Activated CD4-positive, alpha-beta memory T cell treated with anti-CD3 and anti-CD28 coated beads, Interleukin-2, amount 10 ng/mL, durations not matched to agents 7 days and 5 days (primary cell): ENCODE measurements at regions of chr11 and their contacts with region 1.

Region 1: DNA sequence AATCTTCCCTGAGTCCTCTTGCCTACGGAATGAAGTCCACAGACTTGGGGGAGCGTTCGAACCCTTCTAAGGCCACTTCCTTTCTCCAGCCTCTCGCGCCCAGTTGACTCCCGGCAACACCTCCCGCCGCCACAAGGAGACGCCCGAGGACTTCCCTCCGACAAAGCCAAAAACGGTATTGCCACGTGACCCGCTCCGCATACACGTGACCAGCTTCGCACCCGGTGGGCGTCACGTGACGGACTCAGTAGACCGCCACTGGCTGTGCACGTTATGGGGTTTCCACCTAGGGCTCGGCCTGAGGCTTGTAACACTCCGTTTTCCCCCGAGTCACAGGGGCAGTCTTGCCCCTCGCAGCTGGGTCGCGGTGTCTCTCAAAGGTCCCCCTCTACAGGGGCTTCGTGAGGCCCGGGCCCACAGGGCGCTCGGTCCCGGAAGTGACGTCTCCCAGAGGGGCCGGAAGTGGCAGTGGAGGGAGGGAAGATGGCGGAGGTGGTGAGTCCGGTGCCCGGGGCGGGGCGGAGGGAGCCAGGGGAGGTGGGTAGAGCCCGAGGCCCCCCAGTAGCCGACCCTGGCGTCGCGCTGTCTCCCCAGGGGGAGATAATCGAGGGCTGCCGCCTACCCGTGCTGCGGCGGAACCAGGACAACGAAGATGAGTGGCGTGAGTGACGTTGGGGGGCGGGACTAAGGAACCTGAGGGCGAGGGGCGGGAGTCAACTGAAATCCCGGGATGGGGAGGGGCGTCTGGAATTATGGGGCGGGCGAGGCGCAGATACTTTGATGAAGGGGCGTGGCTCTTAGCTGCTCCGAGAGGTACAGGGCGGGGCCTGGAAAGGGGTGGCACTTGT is at the start of gene KAT5:
- DNase-seq: peak; percentile 99
- H3K4me3 Mint-ChIP-seq: peak within 1 kb of the TSS; percentile 82
- H3K27ac Mint-ChIP-seq: peak within 1 kb of the TSS; percentile 95
- H3K4me1 Mint-ChIP-seq: peaks cover 42% of the 10 kb centered on the region
- H3K27me3 Mint-ChIP-seq: no peaks in the 10 kb centered on the region
- total RNA-seq, gene KAT5: 62.6 to 63.0 TPM

Region 2: GRCh38 chr11:65524014-65524740 is 187.8 kb before region 1 on chr11:
- CTCF ChIA-PET with region 1: no interaction called
- POLR2A ChIA-PET with region 1: no interaction called
- DNase-seq: no peak
- H3K4me3 Mint-ChIP-seq: peak overlapping the region; percentile 66
- H3K27ac Mint-ChIP-seq: peak overlapping the region; percentile 83
- H3K4me1 Mint-ChIP-seq: peaks cover 53% of the 10 kb centered on the region
- H3K27me3 Mint-ChIP-seq: no peaks in the 10 kb centered on the region

Region 3: GRCh38 chr11:65637794-65638317 is 74.2 kb before region 1 on chr11 and contains the start of gene SIPA1:
- CTCF ChIA-PET with region 1: interaction called, 13 read pairs
- POLR2A ChIA-PET with region 1: interaction called, 8 read pairs
- DNase-seq: peak; percentile 69
- H3K4me3 Mint-ChIP-seq: peak within 1 kb of the TSS; percentile 95
- H3K27ac Mint-ChIP-seq: peak within 1 kb of the TSS; percentile 97
- H3K4me1 Mint-ChIP-seq: peaks cover 64% of the 10 kb centered on the region
- H3K27me3 Mint-ChIP-seq: no peaks in the 10 kb centered on the region
- total RNA-seq, gene SIPA1: 201 to 205 TPM

Region 4: GRCh38 chr11:65662799-65663638 is 49.0 kb before region 1 on chr11 and contains the start of gene RELA:
- CTCF ChIA-PET with region 1: interaction called, 6 read pairs
- POLR2A ChIA-PET with region 1: interaction called, 13 read pairs
- DNase-seq: peak; percentile 91
- H3K4me3 Mint-ChIP-seq: peak within 1 kb of the TSS; percentile 89
- H3K27ac Mint-ChIP-seq: peak within 1 kb of the TSS; percentile 93
- H3K4me1 Mint-ChIP-seq: peaks cover 37% of the 10 kb centered on the region
- H3K27me3 Mint-ChIP-seq: no peaks in the 10 kb centered on the region
- total RNA-seq, gene RELA: 91.2 to 102 TPM

Region 5: DNA sequence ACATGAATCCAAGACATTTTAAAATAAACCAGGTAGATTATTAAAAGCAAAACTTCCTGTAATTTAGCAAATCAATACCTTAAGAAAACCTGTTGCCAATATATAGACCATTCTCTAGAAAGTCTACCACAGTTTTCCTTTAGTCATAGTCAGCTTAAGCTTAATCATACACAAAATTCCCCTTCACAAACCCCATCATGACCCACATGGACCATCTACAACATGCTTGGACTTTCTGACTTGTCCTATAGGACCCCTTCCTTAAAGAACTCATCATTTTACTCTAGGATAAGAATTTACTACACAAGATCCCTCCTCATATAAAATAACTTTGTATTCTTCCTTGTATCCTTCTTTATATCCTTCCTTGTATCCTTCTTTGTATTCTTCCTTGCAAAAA is 24.8 kb after region 1 on chr11:
- CTCF ChIA-PET with region 1: no interaction called
- POLR2A ChIA-PET with region 1: no interaction called
- DNase-seq: no peak
- H3K4me3 Mint-ChIP-seq: no peak overlapping the region
- H3K27ac Mint-ChIP-seq: no peak overlapping the region
- H3K4me1 Mint-ChIP-seq: no peaks in the 10 kb centered on the region
- H3K27me3 Mint-ChIP-seq: peaks cover 38% of the 10 kb centered on the region

Region 6: DNA sequence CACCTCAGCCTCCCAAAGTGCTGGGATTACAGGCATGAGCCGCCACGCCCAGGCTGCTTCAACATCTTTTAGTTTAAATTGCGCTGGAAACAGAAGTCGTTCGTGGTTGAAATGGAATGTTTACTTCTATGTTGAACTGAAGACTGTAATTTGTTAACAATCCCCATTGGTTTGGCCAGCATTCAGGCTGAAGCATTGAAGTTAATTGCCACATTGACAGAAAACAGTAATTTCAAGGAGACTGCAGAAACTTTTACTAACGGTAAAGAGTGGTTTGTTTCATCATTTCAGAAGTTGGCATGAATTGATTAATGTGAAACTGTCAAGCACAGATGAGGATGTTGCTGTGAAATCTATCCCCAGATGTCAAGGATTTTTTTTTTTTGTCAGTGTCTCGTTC is 54.5 kb after region 1 on chr11:
- CTCF ChIA-PET with region 1: interaction called, 35 read pairs
- POLR2A ChIA-PET with region 1: interaction called, 3 read pairs
- DNase-seq: no peak
- H3K4me3 Mint-ChIP-seq: no peak overlapping the region
- H3K27ac Mint-ChIP-seq: no peak overlapping the region
- H3K4me1 Mint-ChIP-seq: peaks cover 7% of the 10 kb centered on the region
- H3K27me3 Mint-ChIP-seq: peaks cover 1% of the 10 kb centered on the region

Region 7: DNA sequence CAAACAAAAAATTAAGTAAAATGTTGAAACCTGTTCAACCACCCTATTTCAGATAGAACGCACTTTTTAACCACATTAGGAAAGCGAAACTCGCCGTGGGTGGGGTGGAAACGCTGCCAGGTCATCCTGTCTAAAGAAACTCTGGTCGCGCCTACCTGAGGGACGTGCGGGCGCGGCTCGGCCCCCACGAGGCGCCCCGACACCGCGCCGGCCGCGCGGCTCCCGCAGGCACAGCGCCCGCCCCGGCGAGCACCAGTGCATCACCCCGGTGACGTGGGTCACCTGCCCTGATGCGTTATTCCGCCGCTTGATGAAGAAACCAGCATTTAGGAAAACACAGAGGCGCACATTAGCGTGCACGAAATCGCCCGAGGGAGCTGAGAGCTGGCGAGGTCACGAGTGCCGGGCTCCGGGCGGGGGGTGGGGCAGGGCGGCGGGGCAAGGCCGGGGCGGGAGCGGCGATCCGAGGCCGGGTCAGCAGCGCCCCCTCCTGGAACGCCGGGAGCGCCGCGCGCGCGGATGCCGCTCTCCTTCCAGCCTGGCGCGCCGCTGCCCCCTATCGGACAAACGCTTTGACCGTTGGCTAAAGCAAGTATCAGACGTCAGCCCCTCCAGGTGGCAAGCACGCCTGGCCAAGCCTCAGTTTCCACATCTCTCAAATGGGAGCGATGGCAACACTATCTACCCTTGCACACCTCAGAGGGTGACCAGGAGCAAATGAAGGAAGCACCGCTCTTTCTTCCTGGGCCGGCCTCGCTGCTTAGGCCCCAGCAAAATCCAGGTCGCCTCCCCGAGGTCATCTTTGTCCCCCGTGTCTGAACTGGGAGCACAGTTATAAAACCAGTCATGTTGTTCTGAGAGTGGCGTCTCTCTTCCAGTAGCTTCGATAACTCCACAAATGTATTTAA is 106.1 kb after region 1 on chr11:
- CTCF ChIA-PET with region 1: interaction called, 46 read pairs
- POLR2A ChIA-PET with region 1: interaction called, 12 read pairs
- DNase-seq: peak; percentile 94
- H3K4me3 Mint-ChIP-seq: peak overlapping the region; percentile 74
- H3K27ac Mint-ChIP-seq: peak overlapping the region; percentile 65
- H3K4me1 Mint-ChIP-seq: peaks cover 17% of the 10 kb centered on the region
- H3K27me3 Mint-ChIP-seq: peaks cover 17% of the 10 kb centered on the region

Region 8: DNA sequence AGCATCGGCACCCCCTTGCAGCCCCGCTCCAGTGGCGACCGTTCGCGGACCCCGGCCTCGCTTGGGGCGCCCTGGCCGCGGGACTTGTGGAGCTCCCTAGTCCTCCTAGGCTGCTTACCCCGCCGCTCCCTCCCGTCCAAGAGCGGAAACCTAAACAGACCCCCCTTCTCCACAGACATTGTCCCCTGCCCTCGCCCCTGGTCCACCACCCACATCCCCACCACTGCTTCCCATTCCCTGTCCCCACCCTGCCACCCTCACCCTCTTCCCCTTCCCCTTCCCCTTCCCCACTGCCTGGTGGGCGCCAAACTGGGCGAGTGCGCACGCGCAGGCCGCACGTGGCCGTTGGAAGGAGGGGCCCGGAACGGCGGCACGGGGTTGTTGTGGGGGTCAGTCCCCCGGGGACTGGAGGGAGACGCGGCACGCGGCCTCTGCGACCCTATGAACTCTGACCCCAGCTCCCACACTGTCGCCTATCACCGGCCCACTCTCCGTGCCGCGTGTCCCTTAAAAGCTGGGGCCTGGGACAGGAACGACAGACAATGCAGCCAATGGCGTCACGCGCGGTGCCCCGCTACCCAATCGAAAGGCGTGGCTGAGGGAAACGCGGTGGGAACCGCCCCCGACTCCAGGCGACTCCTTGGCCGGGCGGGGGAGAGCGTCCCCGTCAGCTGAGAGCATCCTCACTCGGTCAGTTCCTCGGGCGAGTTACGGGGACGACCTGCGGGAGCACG is 121.5 kb after region 1 on chr11 and contains the start of gene SNX32:
- CTCF ChIA-PET with region 1: interaction called, 14 read pairs
- POLR2A ChIA-PET with region 1: interaction called, 5 read pairs
- DNase-seq: peak; percentile 96
- H3K4me3 Mint-ChIP-seq: no peak within 1 kb of the TSS
- H3K27ac Mint-ChIP-seq: peak within 1 kb of the TSS; percentile 29
- H3K4me1 Mint-ChIP-seq: peaks cover 19% of the 10 kb centered on the region
- H3K27me3 Mint-ChIP-seq: peaks cover 26% of the 10 kb centered on the region
- total RNA-seq, gene SNX32: 0.83 to 1.6 TPM

Region 9: GRCh38 chr11:66051766-66052663 is 340.0 kb after region 1 on chr11 and contains the start of gene SF3B2:
- CTCF ChIA-PET with region 1: interaction called, 5 read pairs
- POLR2A ChIA-PET with region 1: interaction called, 11 read pairs
- DNase-seq: peak; percentile 98
- H3K4me3 Mint-ChIP-seq: peak within 1 kb of the TSS; percentile 100
- H3K27ac Mint-ChIP-seq: peak within 1 kb of the TSS; percentile 96
- H3K4me1 Mint-ChIP-seq: peaks cover 37% of the 10 kb centered on the region
- H3K27me3 Mint-ChIP-seq: peaks cover 2% of the 10 kb centered on the region
- total RNA-seq, gene SF3B2: 230 to 241 TPM